ENCODE measurements at regions of chr13 and their contacts with region 1.

Region 1: GRCh38 chr13:51844862-51845573 is at the start of gene TMEM272:
- DNase-seq: peak in 8 of 9 donors; percentile 26 to 69 (median 42)
- ATAC-seq: peak; percentile 88
- H3K4me3 ChIP-seq: no peak within 1 kb of the TSS
- H3K4me3 Mint-ChIP-seq: peak within 1 kb of the TSS in 8 of 10 donors; percentile 19 to 75 (median 58)
- H3K27ac ChIP-seq: no peak within 1 kb of the TSS
- H3K27ac Mint-ChIP-seq: no peak within 1 kb of the TSS
- H3K4me1 ChIP-seq: peaks cover 0 to 6% of the 10 kb centered on the region in 2 donors
- H3K4me1 Mint-ChIP-seq: peaks cover 0 to 12% (median 7%) of the 10 kb centered on the region in 7 donors
- H3K27me3 ChIP-seq: no peaks in the 10 kb centered on the region
- H3K27me3 Mint-ChIP-seq: peaks cover 0 to 24% (median 11%) of the 10 kb centered on the region in 5 donors
- total RNA-seq, gene TMEM272: 0.19 to 23.3 (median 5.9) TPM

Region 2: GRCh38 chr13:51465124-51465523 is 379.9 kb before region 1 on chr13:
- CTCF ChIA-PET with region 1: no interaction called
- POLR2A ChIA-PET with region 1: no interaction called
- intact Hi-C with region 1: no loop called
- DNase-seq: no peak
- ATAC-seq: no peak
- H3K4me3 ChIP-seq: no peak overlapping the region
- H3K4me3 Mint-ChIP-seq: no peak overlapping the region
- H3K27ac ChIP-seq: no peak overlapping the region
- H3K27ac Mint-ChIP-seq: peak overlapping the region in 1 of 9 donors; percentile 13
- H3K4me1 ChIP-seq: no peaks in the 10 kb centered on the region
- H3K4me1 Mint-ChIP-seq: peaks cover 0 to 3% (median 0%) of the 10 kb centered on the region in 7 donors
- H3K27me3 ChIP-seq: no peaks in the 10 kb centered on the region
- H3K27me3 Mint-ChIP-seq: peaks cover 0 to 6% (median 3%) of the 10 kb centered on the region in 5 donors

Region 3: DNA sequence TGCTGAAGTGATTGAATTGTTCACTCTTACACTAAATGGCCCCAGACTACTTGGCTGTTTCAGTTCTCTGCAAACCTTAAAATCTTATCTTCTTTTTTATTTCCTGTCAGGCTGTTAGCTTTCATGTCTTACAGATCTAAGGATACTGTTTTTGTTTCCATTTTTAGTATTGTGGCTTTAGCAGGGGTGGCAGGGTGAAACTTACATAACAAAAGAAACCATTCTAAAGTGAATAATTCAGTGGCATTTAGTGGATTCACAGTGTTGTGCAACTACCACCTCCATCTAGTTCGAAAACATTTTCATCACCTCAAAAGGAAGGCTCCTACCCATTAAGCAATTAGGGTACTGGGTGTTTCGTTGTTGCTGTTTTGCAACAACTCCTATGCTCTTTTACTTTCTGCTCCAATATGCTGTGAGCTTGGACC is 19.8 kb before region 1 on chr13:
- CTCF ChIA-PET with region 1: interaction called, 3 read pairs
- POLR2A ChIA-PET with region 1: interaction called, 4 read pairs
- intact Hi-C with region 1: loop called in 1 of 2 experiments (anchors 2 kb)
- DNase-seq: peak in 7 of 9 donors; percentile 62 to 90 (median 84)
- ATAC-seq: peak; percentile 81
- H3K4me3 ChIP-seq: peak overlapping the region; percentile 75
- H3K4me3 Mint-ChIP-seq: peak overlapping the region; percentile 62 to 100 (median 97)
- H3K27ac ChIP-seq: peak overlapping the region; percentile 85
- H3K27ac Mint-ChIP-seq: peak overlapping the region; percentile 86 to 99 (median 95)
- H3K4me1 ChIP-seq: peaks cover 61 to 78% of the 10 kb centered on the region in 2 donors
- H3K4me1 Mint-ChIP-seq: peaks cover 57 to 80% (median 63%) of the 10 kb centered on the region in 7 donors
- H3K27me3 ChIP-seq: no peaks in the 10 kb centered on the region
- H3K27me3 Mint-ChIP-seq: peaks cover 0 to 10% (median 0%) of the 10 kb centered on the region in 5 donors

Region 4: DNA sequence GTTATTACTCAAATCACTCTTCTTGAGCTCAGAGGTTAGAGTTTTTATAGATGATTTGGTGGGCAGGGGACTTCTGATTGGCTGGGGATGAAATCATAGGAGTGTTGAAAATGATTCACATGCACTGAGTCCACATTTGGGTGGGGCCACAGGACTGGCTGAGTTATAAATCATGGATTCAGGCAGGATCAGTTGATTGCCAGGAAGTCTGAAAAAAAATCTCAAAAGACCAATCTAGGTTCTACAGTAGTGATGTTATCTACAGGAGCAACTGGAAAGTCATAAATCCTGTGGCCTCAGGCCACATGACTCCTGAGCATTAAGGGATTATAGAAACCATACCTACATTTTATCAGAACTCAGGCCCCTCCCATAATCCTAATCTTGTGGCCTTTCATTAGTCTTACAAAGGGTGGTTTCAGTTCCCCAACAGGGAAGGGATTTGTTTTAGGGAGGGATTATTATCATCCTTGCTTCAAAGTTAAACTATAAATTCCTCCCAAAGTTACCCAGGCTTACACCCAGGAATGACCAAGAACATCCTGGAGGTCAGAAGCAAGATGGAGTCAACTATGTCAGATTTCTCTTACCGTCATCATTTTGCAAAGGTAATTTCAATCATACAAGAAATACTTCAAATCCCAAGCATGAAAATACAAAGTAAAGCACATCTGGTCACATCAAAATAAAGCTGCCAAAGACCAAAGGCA is 11.2 kb after region 1 on chr13:
- CTCF ChIA-PET with region 1: no interaction called
- POLR2A ChIA-PET with region 1: no interaction called
- intact Hi-C with region 1: no loop called
- DNase-seq: no peak
- ATAC-seq: no peak
- H3K4me3 ChIP-seq: no peak overlapping the region
- H3K4me3 Mint-ChIP-seq: no peak overlapping the region
- H3K27ac ChIP-seq: no peak overlapping the region
- H3K27ac Mint-ChIP-seq: no peak overlapping the region
- H3K4me1 ChIP-seq: no peaks in the 10 kb centered on the region
- H3K4me1 Mint-ChIP-seq: peaks cover 0 to 2% (median 0%) of the 10 kb centered on the region in 7 donors
- H3K27me3 ChIP-seq: no peaks in the 10 kb centered on the region
- H3K27me3 Mint-ChIP-seq: peaks cover 1 to 22% (median 7%) of the 10 kb centered on the region in 5 donors

Region 5: GRCh38 chr13:52345048-52345447 is 500.0 kb after region 1 on chr13:
- CTCF ChIA-PET with region 1: no interaction called
- POLR2A ChIA-PET with region 1: no interaction called
- intact Hi-C with region 1: no loop called
- DNase-seq: no peak
- ATAC-seq: no peak
- H3K4me3 ChIP-seq: no peak overlapping the region
- H3K4me3 Mint-ChIP-seq: no peak overlapping the region
- H3K27ac ChIP-seq: no peak overlapping the region
- H3K27ac Mint-ChIP-seq: no peak overlapping the region
- H3K4me1 ChIP-seq: no peaks in the 10 kb centered on the region
- H3K4me1 Mint-ChIP-seq: no peaks in the 10 kb centered on the region
- H3K27me3 ChIP-seq: no peaks in the 10 kb centered on the region
- H3K27me3 Mint-ChIP-seq: peaks cover 4 to 17% (median 6%) of the 10 kb centered on the region in 5 donors